Endothelial cell of umbilical vein (primary cell): ENCODE measurements at regions of chr4 and their contacts with region 1.

Region 1: GRCh38 chr4:76704133-76704881 is 193.6 kb downstream of the SOWAHB start:
- DNase-seq: peak; percentile 75
- H3K4me3 ChIP-seq: peak overlapping the region in 1 of 3 experiments; percentile 40
- H3K27ac ChIP-seq: peak overlapping the region; percentile 96
- H3K4me1 ChIP-seq: peaks cover 35% of the 10 kb centered on the region
- H3K27me3 ChIP-seq: no peaks in the 10 kb centered on the region
- CTCF ChIP-seq: no peak
- POLR2A ChIP-seq: no peak

Region 2: DNA sequence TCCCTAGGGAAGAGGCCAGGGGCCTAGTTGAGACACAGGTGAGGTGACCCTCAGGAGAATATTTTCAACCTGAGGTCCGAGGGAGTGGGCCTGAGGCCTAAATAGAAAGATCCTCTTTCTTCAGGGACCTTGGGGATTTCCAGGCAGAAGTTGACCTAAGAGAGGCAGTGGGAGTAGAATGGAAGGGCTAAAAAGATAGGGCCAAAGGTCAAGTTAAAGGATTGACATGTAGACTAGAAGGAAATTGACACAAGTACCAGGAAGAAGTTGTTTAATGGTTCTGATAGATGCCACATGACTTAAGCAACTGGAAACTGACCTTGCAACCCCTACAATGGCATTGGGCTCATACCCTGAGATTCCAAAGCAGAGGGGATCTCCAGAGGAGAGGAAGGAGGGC is 192.4 kb before region 1 on chr4:
- CTCF ChIA-PET with region 1: no interaction called
- POLR2A ChIA-PET with region 1: no interaction called
- dilution Hi-C with region 1: no loop called
- intact Hi-C with region 1: loop called (anchors 5 kb)
- DNase-seq: no peak
- H3K4me3 ChIP-seq: no peak overlapping the region
- H3K27ac ChIP-seq: no peak overlapping the region
- H3K4me1 ChIP-seq: no peaks in the 10 kb centered on the region
- H3K27me3 ChIP-seq: no peaks in the 10 kb centered on the region
- CTCF ChIP-seq: no peak
- POLR2A ChIP-seq: no peak

Region 3: GRCh38 chr4:76639292-76639691 is 65.0 kb before region 1 on chr4:
- CTCF ChIA-PET with region 1: no interaction called
- POLR2A ChIA-PET with region 1: no interaction called
- dilution Hi-C with region 1: no loop called
- intact Hi-C with region 1: loop called (anchors 2 kb)
- DNase-seq: peak; percentile 56
- H3K4me3 ChIP-seq: peak overlapping the region in 2 of 3 experiments; percentile 64 to 74
- H3K27ac ChIP-seq: peak overlapping the region; percentile 67
- H3K4me1 ChIP-seq: peaks cover 46% of the 10 kb centered on the region
- H3K27me3 ChIP-seq: no peaks in the 10 kb centered on the region
- CTCF ChIP-seq: no peak
- POLR2A ChIP-seq: no peak

Region 4: DNA sequence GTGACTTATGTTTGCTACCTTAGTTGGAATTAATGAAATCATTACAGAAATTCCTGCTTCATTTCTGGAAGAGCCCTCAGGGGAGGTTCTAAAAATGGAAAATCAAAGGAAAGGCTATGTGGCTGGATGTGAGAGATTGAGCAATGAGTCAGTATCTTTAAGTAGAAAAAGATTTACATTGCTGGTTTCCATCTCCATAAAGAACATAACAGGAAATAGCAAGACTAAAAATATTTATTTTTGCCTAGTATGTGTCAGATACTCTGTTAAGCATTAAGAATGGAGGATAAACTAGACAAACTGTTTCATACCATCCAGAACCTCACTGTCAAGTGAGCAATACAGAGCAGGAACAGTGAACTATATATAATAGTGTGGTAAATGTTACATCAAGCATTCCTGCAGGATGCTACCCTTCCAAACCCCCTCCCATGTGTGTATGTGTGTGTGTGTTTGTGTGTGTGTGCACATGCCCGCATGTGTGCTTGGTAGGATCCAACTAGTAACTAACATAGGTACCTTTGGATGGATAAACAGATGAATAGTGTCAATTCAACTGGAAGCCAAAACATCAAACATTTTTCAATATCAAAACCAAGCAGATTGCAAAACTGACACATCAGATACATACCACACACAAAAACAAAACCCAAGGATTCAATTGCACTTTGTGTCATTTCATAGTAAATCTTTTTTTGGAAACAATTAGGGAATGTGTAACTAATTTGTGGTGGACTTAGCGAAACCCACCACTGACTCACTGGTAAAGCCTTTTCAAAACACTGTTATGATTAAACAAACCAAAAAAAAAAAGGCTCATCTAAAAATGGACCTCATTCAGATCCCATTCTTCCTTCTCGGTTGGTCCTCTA is 45.8 kb before region 1 on chr4:
- CTCF ChIA-PET with region 1: no interaction called
- POLR2A ChIA-PET with region 1: no interaction called
- dilution Hi-C with region 1: no loop called
- intact Hi-C with region 1: loop called (anchors 1 kb)
- DNase-seq: peak; percentile 79
- H3K4me3 ChIP-seq: no peak overlapping the region
- H3K27ac ChIP-seq: peak overlapping the region; percentile 83
- H3K4me1 ChIP-seq: peaks cover 23% of the 10 kb centered on the region
- H3K27me3 ChIP-seq: no peaks in the 10 kb centered on the region
- CTCF ChIP-seq: no peak
- POLR2A ChIP-seq: peak; percentile 39

Region 5: GRCh38 chr4:76689241-76689817 is 15.0 kb before region 1 on chr4:
- CTCF ChIA-PET with region 1: interaction called, 3 read pairs
- POLR2A ChIA-PET with region 1: no interaction called
- dilution Hi-C with region 1: no loop called
- intact Hi-C with region 1: loop called (anchors 1 kb)
- DNase-seq: peak; percentile 40
- H3K4me3 ChIP-seq: peak overlapping the region; percentile 41 to 73 (median 65)
- H3K27ac ChIP-seq: peak overlapping the region; percentile 40
- H3K4me1 ChIP-seq: peaks cover 18% of the 10 kb centered on the region
- H3K27me3 ChIP-seq: no peaks in the 10 kb centered on the region
- CTCF ChIP-seq: no peak
- POLR2A ChIP-seq: no peak

Region 6: DNA sequence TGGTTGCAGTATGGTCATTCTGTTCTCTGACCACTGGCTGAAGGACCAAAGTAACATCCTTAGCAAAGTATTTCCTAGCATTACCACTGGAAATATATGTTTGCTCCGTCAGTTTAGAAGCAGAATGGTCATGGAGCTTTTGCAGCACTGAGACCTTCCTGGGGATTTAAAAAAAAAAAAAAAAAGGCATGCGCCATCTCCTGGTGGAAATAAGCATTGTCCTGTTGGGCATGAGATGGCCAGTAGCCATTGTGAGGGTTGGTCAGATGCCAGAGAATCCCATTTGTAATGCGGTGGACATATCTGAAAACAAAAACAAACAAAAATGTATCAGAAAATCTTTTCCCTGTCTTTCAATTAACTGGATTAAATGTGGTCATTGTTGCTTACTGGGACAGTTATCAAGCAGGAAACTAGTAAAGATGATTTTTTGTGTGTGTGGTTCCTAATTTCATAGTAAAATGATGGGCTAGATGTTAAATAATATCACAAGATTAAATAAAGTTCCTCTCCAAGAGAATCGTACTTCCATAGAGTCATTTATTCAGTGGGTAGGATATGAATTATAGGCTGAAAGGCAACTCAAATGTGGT is 54.1 kb after region 1 on chr4:
- CTCF ChIA-PET with region 1: interaction called, 6 read pairs
- POLR2A ChIA-PET with region 1: no interaction called
- dilution Hi-C with region 1: no loop called
- intact Hi-C with region 1: loop called (anchors 1 kb)
- DNase-seq: peak; percentile 78
- H3K4me3 ChIP-seq: no peak overlapping the region
- H3K27ac ChIP-seq: no peak overlapping the region
- H3K4me1 ChIP-seq: peaks cover 17% of the 10 kb centered on the region
- H3K27me3 ChIP-seq: no peaks in the 10 kb centered on the region
- CTCF ChIP-seq: peak; percentile 66 to 84
- POLR2A ChIP-seq: no peak